ENCODE measurements at regions of chr7 and their contacts with region 1.

Region 1: DNA sequence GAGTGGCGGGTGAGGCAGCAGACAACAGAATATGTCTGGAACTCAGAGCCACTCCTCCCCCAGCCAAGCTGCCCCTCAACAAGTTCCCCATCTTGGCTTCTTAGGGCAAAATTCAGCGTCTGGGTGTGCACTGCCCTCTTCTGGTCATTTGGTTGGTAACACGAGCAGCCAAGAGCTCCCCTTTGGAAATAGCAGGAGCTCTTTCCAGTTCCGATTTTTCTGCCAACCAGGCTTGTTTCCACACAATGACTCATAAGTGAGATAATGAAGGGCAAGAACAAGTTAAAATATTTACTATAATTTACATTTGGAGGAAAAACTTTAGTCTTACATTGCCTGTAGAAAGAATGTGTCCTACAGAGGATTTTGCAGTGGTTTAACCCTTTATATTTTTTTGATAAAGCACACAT is 70.5 kb downstream of the ADCYAP1R1 start:
- DNase-seq: peak in 1 of 2 donors; percentile 67
- ATAC-seq: peak; percentile 85
- H3K4me3 ChIP-seq: no peak overlapping the region
- H3K27ac ChIP-seq: no peak overlapping the region
- H3K4me1 ChIP-seq: no peaks in the 10 kb centered on the region
- H3K27me3 ChIP-seq: no peaks in the 10 kb centered on the region

Region 2: DNA sequence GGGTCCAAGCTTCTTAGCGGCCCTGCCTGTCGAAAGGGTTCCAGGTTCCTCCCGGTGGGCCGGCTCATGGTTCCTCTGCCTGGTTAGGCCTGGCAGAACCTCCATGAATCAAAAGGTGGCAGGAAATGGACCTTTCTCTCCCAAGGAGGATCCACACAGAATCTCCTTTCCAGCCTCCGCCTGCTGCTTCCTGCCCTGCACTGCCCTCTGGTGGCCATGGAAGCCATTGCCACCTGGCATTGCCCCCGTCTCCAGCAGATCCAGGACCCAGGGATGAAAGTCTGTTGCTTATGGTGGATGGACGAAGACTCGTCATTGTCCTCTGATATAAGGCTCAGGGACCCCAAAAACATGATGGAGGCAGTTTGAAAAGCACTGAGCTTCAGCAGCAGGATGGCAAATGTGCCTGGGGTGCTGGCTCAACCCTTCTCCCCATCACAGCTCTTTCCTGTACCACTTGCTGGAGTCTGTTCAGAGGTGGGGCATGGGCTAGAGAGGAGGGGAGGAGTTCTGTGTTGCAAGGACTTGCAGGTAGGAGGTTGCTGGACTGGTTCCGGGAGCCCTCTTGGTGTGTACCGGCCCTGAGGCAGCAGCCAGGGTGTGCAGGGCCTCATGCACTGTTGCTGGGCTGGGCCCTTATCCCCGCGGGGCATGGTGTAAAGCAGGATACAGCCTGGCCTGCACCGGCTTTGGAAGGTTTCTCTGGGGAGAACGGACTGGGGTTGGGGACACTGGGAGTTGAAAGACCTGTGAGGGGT is 382.1 kb before region 1 on chr7:
- intact Hi-C with region 1: loop called in 1 of 2 experiments (anchors 10 kb)
- DNase-seq: peak; percentile 78 to 92
- ATAC-seq: peak; percentile 79
- H3K4me3 ChIP-seq: no peak overlapping the region
- H3K27ac ChIP-seq: no peak overlapping the region
- H3K4me1 ChIP-seq: no peaks in the 10 kb centered on the region
- H3K27me3 ChIP-seq: no peaks in the 10 kb centered on the region

Region 3: GRCh38 chr7:30983042-30983913 is 139.4 kb before region 1 on chr7:
- intact Hi-C with region 1: loop called (anchors 1 to 2 kb)
- DNase-seq: peak; percentile 87 to 96
- ATAC-seq: peak; percentile 88
- H3K4me3 ChIP-seq: no peak overlapping the region
- H3K27ac ChIP-seq: no peak overlapping the region
- H3K4me1 ChIP-seq: no peaks in the 10 kb centered on the region
- H3K27me3 ChIP-seq: no peaks in the 10 kb centered on the region

Region 4: GRCh38 chr7:31027161-31027965 is 95.3 kb before region 1 on chr7:
- intact Hi-C with region 1: no loop called
- DNase-seq: peak in 1 of 2 donors; percentile 72
- ATAC-seq: no peak
- H3K4me3 ChIP-seq: no peak overlapping the region
- H3K27ac ChIP-seq: no peak overlapping the region
- H3K4me1 ChIP-seq: no peaks in the 10 kb centered on the region
- H3K27me3 ChIP-seq: no peaks in the 10 kb centered on the region

Measured in aorta (tissue), 5 donors.